Ovary (tissue), 10 donors: ENCODE measurements at regions of chr12 and their contacts with region 1.

Region 1: GRCh38 chr12:117228239-117228638 is 38.0 kb upstream of the FBXO21 start:
- DNase-seq: no peak
- H3K4me3 ChIP-seq: no peak overlapping the region
- H3K27ac ChIP-seq: no peak overlapping the region
- H3K4me1 ChIP-seq: no peaks in the 10 kb centered on the region
- H3K27me3 ChIP-seq: no peaks in the 10 kb centered on the region
- CTCF ChIP-seq: no peak
- EP300 ChIP-seq: no peak
- POLR2A ChIP-seq: no peak

Region 2: DNA sequence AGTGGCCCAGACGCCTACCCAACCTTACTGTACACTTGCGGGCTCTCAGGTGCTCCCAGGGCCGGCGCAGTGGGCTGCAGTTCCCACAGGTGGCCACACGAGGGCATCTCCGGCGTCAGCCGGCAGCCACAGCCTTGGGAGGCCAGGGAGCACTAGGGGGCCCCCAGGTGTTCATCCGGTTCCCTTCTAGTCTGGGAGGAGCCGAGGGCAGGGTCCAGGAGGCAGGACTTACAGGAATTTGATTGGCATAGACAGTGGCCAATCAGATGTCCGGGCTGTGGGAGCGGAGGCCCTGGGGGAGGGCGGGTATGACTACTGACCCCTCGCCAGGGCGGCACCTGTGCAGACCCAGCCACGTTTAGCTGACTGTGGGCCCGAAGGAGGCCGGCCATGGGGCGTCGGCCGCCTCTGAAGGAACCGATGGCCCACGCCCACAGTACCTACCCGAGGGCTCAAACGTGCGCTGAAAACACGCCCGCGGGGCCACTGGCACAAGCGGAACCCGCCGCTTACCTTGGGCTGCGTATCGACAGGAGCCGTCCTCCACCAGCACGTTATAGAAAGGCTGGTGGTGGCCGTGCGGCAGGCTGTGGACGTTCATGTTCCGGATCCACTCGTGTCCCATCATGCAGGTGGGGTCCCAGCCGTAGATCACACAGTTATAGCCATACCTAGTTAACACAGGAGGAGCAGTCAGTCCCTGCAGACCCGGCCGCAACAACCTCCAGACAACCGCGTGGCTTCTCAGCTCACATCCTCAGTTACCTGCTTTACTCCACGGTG is 72.8 kb before region 1 on chr12:
- intact Hi-C with region 1: no loop called
- DNase-seq: peak; percentile 44 to 76 (median 52)
- H3K4me3 ChIP-seq: no peak overlapping the region
- H3K27ac ChIP-seq: no peak overlapping the region
- H3K4me1 ChIP-seq: no peaks in the 10 kb centered on the region
- H3K27me3 ChIP-seq: no peaks in the 10 kb centered on the region
- CTCF ChIP-seq: peak; percentile 39 to 69 (median 48)
- EP300 ChIP-seq: no peak
- POLR2A ChIP-seq: no peak

Region 3: GRCh38 chr12:117501076-117501869 is 273.0 kb after region 1 on chr12:
- intact Hi-C with region 1: no loop called
- DNase-seq: no peak
- H3K4me3 ChIP-seq: no peak overlapping the region
- H3K27ac ChIP-seq: no peak overlapping the region
- H3K4me1 ChIP-seq: no peaks in the 10 kb centered on the region
- H3K27me3 ChIP-seq: no peaks in the 10 kb centered on the region
- CTCF ChIP-seq: no peak
- EP300 ChIP-seq: no peak
- POLR2A ChIP-seq: no peak

Region 4: DNA sequence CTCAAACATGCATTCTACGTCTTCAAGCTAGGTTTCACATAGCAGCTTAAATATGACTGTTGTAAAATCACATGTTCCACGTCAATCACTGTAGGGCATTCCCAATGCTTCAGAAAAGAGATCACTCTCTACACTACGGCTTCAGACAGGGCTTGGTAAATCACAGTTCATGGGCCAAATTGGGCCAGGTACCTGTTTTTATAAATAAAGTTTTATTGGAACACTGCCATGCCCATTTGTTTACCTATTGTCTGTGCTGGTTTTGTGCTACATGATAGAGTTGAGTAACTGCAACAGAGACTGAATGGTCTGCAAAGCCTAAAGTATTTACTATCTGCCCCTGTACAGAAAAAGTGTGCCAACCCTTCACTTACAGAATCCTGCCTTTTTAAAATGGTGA is 530.8 kb after region 1 on chr12:
- intact Hi-C with region 1: loop called in 1 of 4 experiments (anchors 5 kb)
- DNase-seq: no peak
- H3K4me3 ChIP-seq: no peak overlapping the region
- H3K27ac ChIP-seq: no peak overlapping the region
- H3K4me1 ChIP-seq: no peaks in the 10 kb centered on the region
- H3K27me3 ChIP-seq: no peaks in the 10 kb centered on the region
- CTCF ChIP-seq: no peak
- EP300 ChIP-seq: no peak
- POLR2A ChIP-seq: no peak